ENCODE measurements at regions of chr13 and their contacts with region 1.

Region 1: DNA sequence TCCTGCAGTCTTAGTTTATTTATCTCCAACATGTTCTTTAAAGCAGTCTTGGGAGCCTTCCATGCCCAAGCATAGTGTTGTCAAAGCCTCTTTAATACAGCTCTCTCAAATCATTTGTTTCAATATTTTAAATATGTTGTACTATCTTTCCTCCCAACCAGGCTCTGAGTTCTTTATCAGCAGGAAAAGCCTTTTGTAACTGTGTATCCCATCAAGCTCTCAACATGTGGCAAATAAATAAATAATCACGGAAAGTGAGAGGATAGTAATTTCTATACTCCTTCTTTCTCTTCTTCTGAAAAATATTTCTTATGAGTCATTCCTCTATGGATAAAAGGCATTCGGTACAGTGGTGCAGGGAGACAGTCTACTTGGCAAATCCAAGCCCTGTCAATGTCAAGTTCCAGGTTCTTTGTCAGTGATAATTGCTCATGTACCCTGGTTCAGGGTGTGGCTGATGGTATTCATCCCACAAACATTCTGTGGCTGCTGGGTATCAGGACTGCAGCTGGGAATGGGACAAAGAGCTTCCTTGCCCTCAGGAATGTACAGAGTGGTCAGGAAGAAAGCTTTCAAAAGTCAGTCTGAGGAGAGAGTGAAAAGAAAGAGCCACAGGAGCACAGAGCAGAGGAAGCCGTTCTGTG is 384.3 kb downstream of the EFNB2 start:
- DNase-seq: no peak
- H3K4me3 ChIP-seq: no peak overlapping the region
- H3K27ac ChIP-seq: no peak overlapping the region
- H3K4me1 ChIP-seq: no peaks in the 10 kb centered on the region
- H3K27me3 ChIP-seq: no peaks in the 10 kb centered on the region
- CTCF ChIP-seq: no peak
- EP300 ChIP-seq: no peak
- POLR2A ChIP-seq: no peak

Region 2: DNA sequence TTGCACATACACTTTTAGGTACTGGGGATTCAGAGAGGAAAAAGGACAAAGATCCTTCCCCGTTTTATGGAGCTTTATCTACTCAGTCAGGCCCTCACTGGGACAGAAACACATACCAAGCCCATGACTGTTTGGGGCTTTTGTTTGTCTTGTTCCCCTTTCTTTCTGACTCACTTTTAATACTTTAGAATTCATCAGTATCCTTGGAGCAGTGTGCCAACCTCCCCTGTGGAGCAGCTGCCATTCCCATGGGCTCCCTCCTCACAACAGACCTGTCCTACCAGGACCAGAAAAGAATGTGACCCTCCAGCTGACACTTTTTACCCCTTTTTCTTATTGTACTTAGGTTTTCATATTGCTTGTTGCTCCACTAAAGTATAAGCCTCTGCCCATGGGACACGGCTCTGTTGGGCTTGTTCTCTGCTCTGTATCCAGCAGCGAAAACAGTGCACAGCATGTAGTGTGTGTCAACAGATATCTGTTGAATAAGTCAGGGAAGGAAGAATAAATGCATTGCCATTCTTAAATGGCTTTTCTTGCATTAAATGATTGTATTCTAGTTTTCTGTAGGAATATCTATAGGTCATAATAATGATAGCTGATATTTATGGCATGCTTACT is 46.8 kb before region 1 on chr13:
- intact Hi-C with region 1: no loop called
- DNase-seq: no peak
- H3K4me3 ChIP-seq: no peak overlapping the region
- H3K27ac ChIP-seq: no peak overlapping the region
- H3K4me1 ChIP-seq: no peaks in the 10 kb centered on the region
- H3K27me3 ChIP-seq: no peaks in the 10 kb centered on the region
- CTCF ChIP-seq: no peak
- EP300 ChIP-seq: no peak
- POLR2A ChIP-seq: no peak

Region 3: GRCh38 chr13:106173346-106173745 is 22.2 kb after region 1 on chr13:
- intact Hi-C with region 1: no loop called
- DNase-seq: no peak
- H3K4me3 ChIP-seq: no peak overlapping the region
- H3K27ac ChIP-seq: no peak overlapping the region
- H3K4me1 ChIP-seq: no peaks in the 10 kb centered on the region
- H3K27me3 ChIP-seq: no peaks in the 10 kb centered on the region
- CTCF ChIP-seq: no peak
- EP300 ChIP-seq: no peak
- POLR2A ChIP-seq: no peak

Region 4: GRCh38 chr13:106210324-106210723 is 59.1 kb after region 1 on chr13:
- intact Hi-C with region 1: loop called in 1 of 4 experiments (anchors 2 kb)
- DNase-seq: no peak
- H3K4me3 ChIP-seq: no peak overlapping the region
- H3K27ac ChIP-seq: no peak overlapping the region
- H3K4me1 ChIP-seq: no peaks in the 10 kb centered on the region
- H3K27me3 ChIP-seq: no peaks in the 10 kb centered on the region
- CTCF ChIP-seq: no peak
- EP300 ChIP-seq: no peak
- POLR2A ChIP-seq: no peak

Region 5: DNA sequence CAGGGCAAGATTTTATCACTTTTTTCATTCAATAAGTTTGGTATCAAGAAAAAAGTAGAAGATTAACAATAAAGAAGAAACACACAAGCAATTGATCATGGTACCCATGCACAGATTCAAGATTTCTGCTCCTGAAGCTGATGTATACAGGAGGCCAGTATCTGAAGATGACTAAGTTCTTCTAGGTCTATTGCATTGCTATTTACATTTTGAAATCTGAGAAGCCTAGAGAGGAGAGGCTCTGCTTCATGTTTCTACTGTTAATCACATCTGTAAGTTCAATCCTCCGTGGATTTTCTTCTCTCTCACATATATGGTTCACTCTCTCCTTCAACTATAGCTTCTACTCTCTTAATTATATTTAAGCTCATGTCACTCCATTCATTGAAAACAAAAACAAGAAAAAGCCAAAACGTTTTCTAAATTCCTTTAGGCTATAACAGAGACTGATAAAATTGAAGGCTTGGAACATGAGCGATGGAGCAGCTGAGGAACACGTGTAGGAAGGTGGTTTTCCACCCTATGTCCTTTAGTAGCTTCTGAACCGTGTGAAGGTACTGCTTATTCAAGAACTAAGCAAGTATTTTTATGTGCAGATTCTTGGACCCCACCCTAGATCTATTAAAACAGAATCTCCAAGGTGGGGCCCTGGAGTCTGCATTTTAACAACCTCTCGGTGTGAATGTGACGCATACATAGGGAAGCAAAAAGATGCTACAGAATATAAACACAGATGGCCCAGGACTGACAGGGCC is 186.1 kb after region 1 on chr13:
- intact Hi-C with region 1: no loop called
- DNase-seq: no peak
- H3K4me3 ChIP-seq: no peak overlapping the region
- H3K27ac ChIP-seq: no peak overlapping the region
- H3K4me1 ChIP-seq: no peaks in the 10 kb centered on the region
- H3K27me3 ChIP-seq: no peaks in the 10 kb centered on the region
- CTCF ChIP-seq: no peak
- EP300 ChIP-seq: no peak
- POLR2A ChIP-seq: no peak

Region 6: DNA sequence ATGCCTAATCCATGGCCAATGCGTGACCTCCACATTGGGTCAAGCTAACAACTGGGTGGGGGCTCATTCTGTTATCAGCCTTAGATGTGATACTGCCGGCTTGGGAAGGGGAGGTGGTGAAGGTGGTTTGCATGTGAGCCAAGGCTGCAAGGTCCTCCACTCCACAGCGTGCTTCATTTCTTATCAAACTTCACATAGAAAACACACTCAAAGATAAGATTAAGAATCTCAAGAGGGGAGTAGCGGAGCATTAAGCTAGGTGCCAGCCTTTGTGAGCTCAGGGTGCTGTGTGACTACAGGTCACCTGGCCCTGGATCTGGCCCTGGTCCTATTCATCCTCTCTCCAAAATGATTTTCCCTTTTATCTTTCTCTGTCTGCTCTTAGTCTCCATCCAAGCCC is 430.0 kb after region 1 on chr13:
- intact Hi-C with region 1: no loop called
- DNase-seq: no peak
- H3K4me3 ChIP-seq: no peak overlapping the region
- H3K27ac ChIP-seq: no peak overlapping the region
- H3K4me1 ChIP-seq: peaks cover 7% of the 10 kb centered on the region
- H3K27me3 ChIP-seq: no peaks in the 10 kb centered on the region
- CTCF ChIP-seq: no peak
- EP300 ChIP-seq: no peak
- POLR2A ChIP-seq: no peak

Measured in ovary (tissue), 10 donors.